ENCODE measurements at regions of chr3 and their contacts with region 1.

Region 1: DNA sequence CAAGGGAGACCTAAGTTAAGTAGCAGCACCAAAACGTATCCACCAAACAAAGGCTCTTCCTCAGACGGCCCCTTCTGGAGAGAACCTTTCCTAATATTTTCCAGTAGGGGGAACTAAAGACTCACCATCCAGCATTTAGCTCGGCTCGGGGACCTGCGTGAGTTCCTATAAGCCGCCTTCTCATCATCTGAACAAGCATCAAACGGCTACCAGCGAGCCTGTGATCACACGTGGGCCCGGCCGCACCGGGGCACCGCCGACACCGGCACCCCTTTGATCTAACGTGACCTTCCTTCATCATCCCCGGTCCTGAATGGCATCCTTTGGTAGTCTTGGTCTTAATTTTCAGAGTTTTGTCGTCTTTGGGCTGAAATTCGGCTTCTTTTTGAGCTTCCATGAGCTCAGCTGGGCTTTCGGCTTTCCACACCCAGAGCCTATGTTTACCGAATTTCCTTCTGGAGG is 1.4 kb upstream of the ROBO2 start:
- DNase-seq: peak; percentile 11 to 19
- ATAC-seq: peak; percentile 74 to 83
- H3K4me3 ChIP-seq: peak overlapping the region; percentile 29 to 47 (median 41)
- H3K27ac ChIP-seq: no peak overlapping the region
- H3K4me1 ChIP-seq: no peaks in the 10 kb centered on the region
- H3K27me3 ChIP-seq: peaks cover 23 to 26% (median 25%) of the 10 kb centered on the region in 3 donors
- CTCF ChIP-seq: peak; percentile 5 to 52 (median 38)
- POLR2A ChIP-seq: no peak

Region 2: GRCh38 chr3:77254967-77255831 is 216.7 kb after region 1 on chr3:
- in situ Hi-C with region 1: loop called in 3 of 4 experiments (anchors 5 to 10 kb)
- intact Hi-C with region 1: loop called (anchors 1 kb)
- DNase-seq: no peak
- ATAC-seq: peak in 1 of 2 donors; percentile 73
- H3K4me3 ChIP-seq: no peak overlapping the region
- H3K27ac ChIP-seq: no peak overlapping the region
- H3K4me1 ChIP-seq: no peaks in the 10 kb centered on the region
- H3K27me3 ChIP-seq: no peaks in the 10 kb centered on the region
- CTCF ChIP-seq: peak; percentile 21 to 45 (median 41)
- POLR2A ChIP-seq: no peak

Region 3: GRCh38 chr3:77271711-77272110 is 233.2 kb after region 1 on chr3:
- in situ Hi-C with region 1: no loop called
- intact Hi-C with region 1: no loop called
- DNase-seq: no peak
- ATAC-seq: no peak
- H3K4me3 ChIP-seq: no peak overlapping the region
- H3K27ac ChIP-seq: no peak overlapping the region
- H3K4me1 ChIP-seq: no peaks in the 10 kb centered on the region
- H3K27me3 ChIP-seq: no peaks in the 10 kb centered on the region
- CTCF ChIP-seq: no peak
- POLR2A ChIP-seq: no peak

Region 4: GRCh38 chr3:77303955-77304699 is 265.6 kb after region 1 on chr3:
- in situ Hi-C with region 1: no loop called
- intact Hi-C with region 1: no loop called
- DNase-seq: no peak
- ATAC-seq: no peak
- H3K4me3 ChIP-seq: no peak overlapping the region
- H3K27ac ChIP-seq: no peak overlapping the region
- H3K4me1 ChIP-seq: no peaks in the 10 kb centered on the region
- H3K27me3 ChIP-seq: no peaks in the 10 kb centered on the region
- CTCF ChIP-seq: no peak
- POLR2A ChIP-seq: no peak

Region 5: GRCh38 chr3:78645628-78646310 is 1607.3 kb after region 1 on chr3:
- in situ Hi-C with region 1: loop called in 1 of 4 experiments (anchors 25 kb)
- intact Hi-C with region 1: no loop called
- DNase-seq: no peak
- ATAC-seq: peak; percentile 51 to 66
- H3K4me3 ChIP-seq: no peak overlapping the region
- H3K27ac ChIP-seq: no peak overlapping the region
- H3K4me1 ChIP-seq: no peaks in the 10 kb centered on the region
- H3K27me3 ChIP-seq: no peaks in the 10 kb centered on the region
- CTCF ChIP-seq: peak; percentile 37 to 76 (median 65)
- POLR2A ChIP-seq: no peak